ENCODE measurements at regions of chr9 and their contacts with region 1.

Region 1: DNA sequence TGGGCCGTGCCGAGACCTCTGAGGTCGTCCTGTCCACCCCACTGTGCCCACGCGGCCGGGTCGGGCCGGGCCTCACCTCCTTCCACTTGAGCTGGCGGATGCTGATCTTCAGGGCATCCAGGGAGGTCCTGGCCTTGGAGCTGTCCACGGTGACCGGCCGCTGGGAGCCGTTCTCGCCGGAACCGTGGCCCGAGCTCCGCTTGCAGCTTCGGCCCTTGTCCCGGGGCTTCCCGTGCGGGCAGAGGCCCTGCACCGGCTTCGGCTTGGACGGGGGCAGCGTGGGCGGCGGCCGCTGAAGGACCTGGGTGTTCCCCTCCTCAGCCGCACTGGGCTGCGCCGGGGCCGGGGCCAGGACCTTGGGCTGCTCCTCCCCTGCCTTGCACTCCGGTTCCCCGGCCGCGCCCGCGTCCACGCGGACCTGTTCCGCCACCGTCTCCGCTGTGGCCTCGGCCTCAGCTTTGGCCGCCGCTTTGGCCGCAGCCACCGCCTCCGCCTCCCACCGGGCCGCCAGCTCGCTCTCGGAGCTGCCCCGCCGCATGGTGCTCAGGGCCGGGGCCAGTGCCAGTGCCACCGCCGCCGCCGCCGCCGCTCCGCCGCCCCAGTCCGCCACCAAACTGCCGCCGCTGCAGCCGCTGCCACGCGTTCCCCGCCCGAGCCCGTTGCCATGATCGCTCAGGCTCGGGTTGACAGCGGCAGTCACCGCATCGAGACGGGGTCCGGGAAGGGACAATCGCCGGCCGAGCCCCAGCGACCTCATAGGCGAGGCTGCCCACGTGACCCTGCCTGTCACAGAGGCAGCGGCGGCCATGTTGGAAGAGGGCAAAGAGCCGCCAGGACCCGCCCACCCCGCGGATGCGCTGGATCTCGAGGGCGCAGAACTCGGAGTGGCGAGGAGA is at the start of gene TTLL11:
- DNase-seq: peak; percentile 98 to 99 (median 98)
- ATAC-seq: peak; percentile 95 to 99 (median 96)
- H3K4me3 ChIP-seq: peak within 1 kb of the TSS; percentile 65 to 98 (median 92)
- H3K27ac ChIP-seq: peak within 1 kb of the TSS; percentile 42 to 91 (median 74)
- H3K4me1 ChIP-seq: peaks cover 10 to 54% (median 28%) of the 10 kb centered on the region in 12 donors
- H3K27me3 ChIP-seq: no peaks in the 10 kb centered on the region
- CTCF ChIP-seq: no peak
- POLR2A ChIP-seq: peak in 1 of 2 donors; percentile 76
- total RNA-seq, gene TTLL11: 4.3 to 10.9 (median 7.9) TPM

Region 2: DNA sequence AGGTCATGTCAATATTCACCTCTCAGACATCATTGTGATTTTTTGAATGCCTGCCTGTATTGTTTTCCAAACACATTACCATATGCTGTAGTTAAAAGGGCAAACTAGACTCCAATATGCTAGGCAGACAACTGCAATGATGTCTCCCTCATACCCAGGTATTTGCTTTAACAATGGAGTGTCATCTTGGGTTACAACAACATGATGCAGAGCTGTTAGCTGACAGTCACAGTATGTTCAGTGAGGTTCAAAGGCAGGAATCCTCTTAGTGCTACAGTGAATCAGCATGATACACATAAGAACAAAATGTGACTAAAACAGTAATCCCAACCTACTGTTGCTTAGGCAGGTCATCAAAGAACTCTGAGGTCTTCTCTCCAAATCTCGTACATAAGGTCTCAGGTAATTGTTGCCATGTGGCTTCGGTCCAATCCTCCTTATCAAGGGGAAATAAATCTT is 360.8 kb after region 1 on chr9:
- intact Hi-C with region 1: loop called in 6 of 10 experiments (anchors 2 to 10 kb)
- DNase-seq: no peak
- ATAC-seq: no peak
- H3K4me3 ChIP-seq: no peak overlapping the region
- H3K27ac ChIP-seq: no peak overlapping the region
- H3K4me1 ChIP-seq: no peaks in the 10 kb centered on the region
- H3K27me3 ChIP-seq: peaks cover 0 to 10% (median 0%) of the 10 kb centered on the region in 9 donors
- CTCF ChIP-seq: no peak
- POLR2A ChIP-seq: no peak

Region 3: DNA sequence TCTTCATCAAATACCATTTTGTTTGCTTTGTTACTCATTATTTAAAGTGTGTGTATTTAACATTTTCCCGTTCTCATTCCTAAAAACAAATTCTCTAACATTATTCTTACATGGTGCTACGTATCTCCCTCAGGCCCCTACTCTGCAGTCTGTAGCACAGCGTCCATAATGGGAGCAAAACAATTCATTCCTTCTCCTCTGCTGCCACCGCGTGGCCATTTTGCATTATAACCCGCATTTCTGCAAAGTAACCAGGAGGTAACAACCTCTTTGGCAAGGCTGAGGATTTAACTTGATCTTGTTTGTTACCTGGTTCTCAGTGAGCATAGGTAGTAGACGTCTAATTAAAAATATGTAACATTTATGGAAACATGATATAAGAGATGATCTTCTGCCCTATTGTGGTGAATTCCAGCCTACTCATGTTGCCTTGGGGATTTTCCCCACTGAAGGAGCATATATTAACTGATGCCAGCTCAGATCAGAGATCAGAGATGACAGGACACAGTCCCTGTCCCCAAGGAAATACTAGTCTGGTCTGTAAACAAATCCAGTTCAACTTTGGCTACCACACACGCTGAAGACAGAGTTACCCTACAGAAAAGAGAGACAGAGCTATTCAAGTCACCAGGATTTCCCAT is 717.6 kb after region 1 on chr9:
- intact Hi-C with region 1: loop called in 6 of 10 experiments (anchors 5 to 10 kb)
- DNase-seq: peak; percentile 59 to 76 (median 61)
- ATAC-seq: peak; percentile 81 to 93 (median 89)
- H3K4me3 ChIP-seq: no peak overlapping the region
- H3K27ac ChIP-seq: no peak overlapping the region
- H3K4me1 ChIP-seq: peaks cover 0 to 4% (median 0%) of the 10 kb centered on the region in 12 donors
- H3K27me3 ChIP-seq: no peaks in the 10 kb centered on the region
- CTCF ChIP-seq: peak; percentile 65 to 86 (median 76)
- POLR2A ChIP-seq: no peak

Region 4: DNA sequence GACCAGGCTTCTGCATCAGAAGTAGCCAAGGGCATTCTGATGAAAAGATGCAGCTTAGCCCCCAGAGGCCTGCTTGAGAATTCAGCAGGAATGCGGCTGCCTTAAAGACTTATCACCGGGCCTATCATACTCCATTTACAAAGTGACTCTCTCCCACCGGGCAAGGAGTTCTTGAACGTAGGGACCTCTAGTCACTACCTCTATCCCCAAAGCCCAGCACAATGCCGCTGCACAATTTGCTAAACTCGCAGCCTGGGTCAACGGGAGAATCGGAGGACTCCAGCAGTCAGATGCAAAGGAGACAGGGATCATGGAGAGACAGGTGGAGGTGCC is 734.9 kb after region 1 on chr9:
- intact Hi-C with region 1: loop called in 1 of 10 experiments (anchors 10 kb)
- DNase-seq: no peak
- ATAC-seq: peak in 3 of 4 donors; percentile 14 to 18 (median 14)
- H3K4me3 ChIP-seq: peak overlapping the region; percentile 69 to 97 (median 88)
- H3K27ac ChIP-seq: peak overlapping the region; percentile 84 to 99 (median 97)
- H3K4me1 ChIP-seq: peaks cover 0 to 36% (median 21%) of the 10 kb centered on the region in 12 donors
- H3K27me3 ChIP-seq: no peaks in the 10 kb centered on the region
- CTCF ChIP-seq: no peak
- POLR2A ChIP-seq: no peak

Region 5: DNA sequence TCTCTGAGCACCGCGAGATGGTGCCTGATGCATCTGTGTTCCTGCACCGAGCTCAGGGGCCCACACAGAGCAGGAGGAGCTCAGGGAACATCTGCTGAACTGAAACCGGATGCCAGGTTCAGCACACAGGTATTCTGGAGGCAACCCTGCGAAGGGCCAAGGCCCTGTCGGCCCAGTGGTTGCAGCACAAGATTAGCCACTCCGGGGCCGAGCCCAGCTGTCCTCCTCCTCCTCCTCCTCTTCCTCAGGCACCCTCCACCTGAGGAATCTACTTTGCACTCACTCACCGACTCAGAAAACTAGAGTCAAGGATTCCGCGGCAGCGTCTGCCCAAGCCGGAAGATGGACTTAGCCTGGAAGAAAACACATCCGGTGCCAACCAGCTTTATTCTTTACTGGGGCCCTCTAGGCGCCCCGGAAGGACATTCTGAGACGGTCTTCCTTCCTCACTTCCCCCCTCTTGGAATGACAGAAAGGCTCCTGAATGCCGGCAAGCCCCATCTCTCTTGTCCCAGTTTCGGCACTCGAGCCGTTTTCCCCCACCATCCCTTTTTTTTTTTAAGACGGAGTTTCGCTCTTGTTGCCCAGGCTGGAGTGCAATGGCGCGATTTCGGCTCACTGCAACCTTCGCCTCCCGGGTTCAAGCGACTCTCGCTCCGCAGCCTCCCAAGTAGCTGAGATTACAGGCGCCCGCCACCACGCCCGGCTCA is 820.3 kb after region 1 on chr9 and contains the start of gene ZBTB6:
- intact Hi-C with region 1: loop called in 1 of 10 experiments (anchors 10 kb)
- DNase-seq: peak; percentile 66 to 83 (median 78)
- ATAC-seq: peak; percentile 94 to 99 (median 98)
- H3K4me3 ChIP-seq: peak within 1 kb of the TSS; percentile 49 to 94 (median 84)
- H3K27ac ChIP-seq: peak within 1 kb of the TSS in 11 of 12 donors; percentile 75 to 94 (median 80)
- H3K4me1 ChIP-seq: peaks cover 0 to 16% (median 8%) of the 10 kb centered on the region in 12 donors
- H3K27me3 ChIP-seq: no peaks in the 10 kb centered on the region
- CTCF ChIP-seq: no peak
- POLR2A ChIP-seq: peak in 1 of 2 donors; percentile 37
- total RNA-seq, gene ZBTB6: 5.1 to 8.1 (median 6.3) TPM

Measured in heart left ventricle (tissue), 16 donors.